Mammary epithelial cell (primary cell): ENCODE measurements at regions of chr7 and their contacts with region 1.

Region 1: GRCh38 chr7:96578606-96579005 is 131.0 kb downstream of the SEM1 start:
- DNase-seq: no peak
- H3K4me3 ChIP-seq: no peak overlapping the region
- H3K27ac ChIP-seq: no peak overlapping the region
- H3K4me1 ChIP-seq: no peaks in the 10 kb centered on the region
- H3K27me3 ChIP-seq: no peaks in the 10 kb centered on the region
- CTCF ChIP-seq: no peak

Region 2: GRCh38 chr7:96508371-96508770 is 70.2 kb before region 1 on chr7:
- CTCF ChIA-PET with region 1: no interaction called
- dilution Hi-C with region 1: no loop called
- in situ Hi-C with region 1: no loop called
- intact Hi-C with region 1: loop called (anchors 10 kb)
- DNase-seq: peak; percentile 70
- H3K4me3 ChIP-seq: no peak overlapping the region
- H3K27ac ChIP-seq: no peak overlapping the region
- H3K4me1 ChIP-seq: no peaks in the 10 kb centered on the region
- H3K27me3 ChIP-seq: peaks cover 4% of the 10 kb centered on the region
- CTCF ChIP-seq: no peak